ENCODE measurements at regions of chr17 and their contacts with region 1.

Region 1: DNA sequence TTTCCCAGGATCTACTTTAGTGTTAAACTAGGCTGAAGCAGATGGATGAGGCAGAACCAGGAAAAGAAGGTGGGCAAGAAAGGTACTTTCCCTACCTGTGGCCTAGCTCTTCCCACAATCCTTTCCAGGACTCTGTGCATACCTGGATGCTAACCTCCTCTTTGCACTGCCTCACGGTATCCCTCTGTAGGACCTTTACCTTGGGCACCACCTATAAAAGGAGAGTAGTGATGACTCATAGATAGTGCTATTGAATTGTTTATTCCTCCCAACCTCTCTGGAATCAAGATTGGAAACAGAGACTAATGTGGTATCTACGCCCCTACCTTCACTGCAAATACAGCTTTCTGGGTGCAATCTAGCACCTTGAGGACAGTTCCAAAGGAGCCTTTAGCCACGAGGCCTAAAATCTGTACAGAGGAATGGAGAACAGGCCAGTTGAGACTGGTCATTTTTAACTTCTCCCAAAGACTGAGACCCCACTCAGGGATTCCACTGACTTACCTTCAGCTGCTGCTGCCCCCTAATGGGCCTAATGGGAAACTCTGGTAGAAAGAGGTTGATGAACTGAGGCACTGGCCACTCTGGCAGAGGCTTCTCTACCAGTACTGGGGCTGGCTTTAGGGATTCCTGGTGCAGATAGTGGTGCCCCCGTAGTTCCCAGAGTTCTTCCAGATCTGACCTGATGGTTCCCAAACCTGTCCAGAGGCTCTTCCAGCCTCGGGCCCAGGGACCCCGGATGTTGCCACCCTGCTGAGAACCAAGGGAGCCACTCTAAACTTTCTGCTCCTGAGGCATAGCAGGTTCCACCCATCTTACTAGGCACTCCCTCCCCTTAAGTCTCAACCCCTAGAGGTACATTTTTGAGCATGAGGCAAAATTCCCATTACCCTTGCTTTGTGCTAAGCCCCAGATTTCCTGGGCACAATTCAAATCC is 781 bp downstream of the RSKR start:
- DNase-seq: peak in 1 of 2 donors; percentile 30
- H3K4me3 ChIP-seq: no peak overlapping the region
- H3K27ac ChIP-seq: no peak overlapping the region
- H3K4me1 ChIP-seq: no peaks in the 10 kb centered on the region
- H3K27me3 ChIP-seq: no peaks in the 10 kb centered on the region
- CTCF ChIP-seq: peak; percentile 54 to 58

Region 2: DNA sequence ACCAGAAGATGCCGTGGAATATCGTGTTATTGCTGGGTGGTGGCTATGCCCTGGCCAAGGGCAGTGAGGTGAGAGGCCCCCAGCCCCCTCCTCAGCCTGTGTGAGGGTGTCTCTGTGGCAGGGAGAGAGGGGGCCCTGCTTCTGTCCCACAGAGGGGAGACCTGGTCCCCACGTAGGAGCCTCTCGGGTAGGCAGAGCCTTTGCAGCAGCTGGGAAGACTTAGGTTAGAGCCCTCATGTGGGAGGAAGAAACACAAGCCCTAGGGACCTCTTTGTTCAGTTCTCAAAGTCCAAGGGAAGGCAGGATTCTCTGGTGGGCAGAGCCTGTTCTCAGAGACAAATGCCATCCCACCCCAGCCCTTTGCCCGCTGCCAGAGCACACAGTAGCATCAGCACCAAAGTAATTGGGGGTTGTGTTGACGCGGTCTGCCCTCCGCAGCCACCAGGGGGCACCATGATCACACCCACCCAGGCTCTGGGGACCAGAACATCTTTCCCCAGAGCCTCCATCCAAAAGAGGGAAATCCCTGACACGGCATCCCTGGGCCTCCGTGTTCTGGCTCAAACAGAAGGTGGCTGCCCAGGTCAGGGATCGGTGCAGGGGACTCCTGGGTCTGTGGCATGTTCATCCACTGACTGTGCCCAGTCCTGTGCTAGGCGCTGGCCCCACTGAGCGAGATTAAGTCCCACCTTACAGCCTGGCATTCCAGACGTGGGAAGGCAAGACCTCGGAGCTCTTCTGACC is 118.6 kb before region 1 on chr17:
- intact Hi-C with region 1: loop called (anchors 5 kb)
- DNase-seq: peak; percentile 46 to 78
- H3K4me3 ChIP-seq: no peak overlapping the region
- H3K27ac ChIP-seq: no peak overlapping the region
- H3K4me1 ChIP-seq: peaks cover 0 to 12% (median 0%) of the 10 kb centered on the region in 4 donors
- H3K27me3 ChIP-seq: peaks cover 0 to 62% of the 10 kb centered on the region in 2 donors
- CTCF ChIP-seq: peak; percentile 74 to 79

Region 3: DNA sequence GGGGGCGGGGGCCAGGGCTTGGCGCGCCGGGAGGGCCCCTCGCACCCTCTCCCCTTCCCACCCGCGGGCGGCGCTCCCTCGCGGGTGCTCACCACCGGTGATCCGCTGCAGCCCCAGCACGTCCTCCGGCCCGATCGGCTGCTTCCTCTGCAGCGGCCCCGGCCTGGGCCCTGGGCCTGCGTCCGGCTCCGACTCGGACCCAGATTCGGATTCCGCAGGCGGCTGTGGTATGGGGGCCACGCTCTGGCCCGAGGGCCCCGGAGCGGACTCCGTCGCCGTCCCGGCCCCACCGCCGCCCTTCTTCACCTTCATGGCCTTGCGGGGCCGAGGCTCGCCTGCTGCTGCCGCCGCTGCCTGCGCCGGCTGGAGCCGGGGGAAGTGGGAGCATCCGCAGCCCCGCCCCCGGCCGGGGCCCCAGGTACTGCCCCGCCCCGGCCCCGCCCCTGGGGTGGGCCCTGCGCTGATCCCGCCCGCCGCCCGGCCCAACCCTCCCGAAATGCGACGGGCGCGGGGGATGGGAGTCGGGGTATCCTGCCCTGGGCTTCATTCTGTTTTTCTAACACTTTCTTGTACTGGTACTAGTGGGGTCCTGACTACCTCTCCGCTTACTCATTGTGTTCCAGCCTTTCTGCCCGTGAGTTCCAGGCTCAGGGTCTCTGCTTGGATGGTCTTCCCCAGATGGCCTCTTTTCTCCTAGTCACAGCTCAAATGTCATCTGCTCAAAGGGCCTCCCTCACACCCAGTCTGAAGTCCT is 60.8 kb before region 1 on chr17 and contains the start of gene UNC119:
- intact Hi-C with region 1: loop called (anchors 5 kb)
- DNase-seq: peak; percentile 59 to 84
- H3K4me3 ChIP-seq: peak within 1 kb of the TSS; percentile 79 to 87
- H3K27ac ChIP-seq: peak within 1 kb of the TSS; percentile 74 to 75
- H3K4me1 ChIP-seq: peaks cover 0 to 21% (median 12%) of the 10 kb centered on the region in 4 donors
- H3K27me3 ChIP-seq: no peaks in the 10 kb centered on the region
- CTCF ChIP-seq: no peak